Activated naive CD4-positive, alpha-beta T cell treated with anti-CD3 and anti-CD28 coated beads for 36 hours (primary cell): ENCODE measurements at regions of chr2 and their contacts with region 1.

Region 1: DNA sequence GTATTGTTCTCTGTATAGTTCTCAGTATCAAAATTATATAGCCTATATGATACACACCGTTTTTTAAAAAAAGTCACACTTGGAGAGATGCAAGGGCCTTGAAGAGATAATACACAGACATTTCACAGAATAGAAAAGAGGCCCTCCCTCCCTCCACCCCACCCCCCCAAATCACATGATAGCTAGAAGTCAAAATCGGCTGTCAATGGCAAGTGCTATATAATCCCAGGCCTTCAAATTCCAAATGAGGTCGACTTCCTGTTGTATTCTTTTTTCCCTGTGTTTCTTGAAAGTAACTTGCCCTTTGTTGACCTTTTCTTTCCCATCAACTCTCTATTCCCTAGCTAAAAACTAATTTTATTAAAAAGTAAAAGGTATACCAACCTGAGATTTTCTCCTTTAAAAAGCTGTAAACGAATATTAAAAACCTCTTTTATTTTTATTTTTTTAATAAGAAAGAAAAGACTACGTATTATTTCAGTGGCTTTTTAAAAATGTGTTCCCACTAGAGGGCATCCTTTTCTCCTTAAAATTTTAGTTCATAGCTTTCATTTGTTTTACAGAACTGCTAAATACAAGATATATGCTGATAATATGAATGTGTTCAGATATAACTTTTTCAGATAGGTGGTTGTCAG is 46.6 kb downstream of the KCMF1 start:
- DNase-seq: no peak
- H3K4me3 Mint-ChIP-seq: no peak overlapping the region
- H3K27ac Mint-ChIP-seq: peak overlapping the region; percentile 66
- H3K4me1 Mint-ChIP-seq: peaks cover 72% of the 10 kb centered on the region
- H3K27me3 Mint-ChIP-seq: no peaks in the 10 kb centered on the region

Region 2: DNA sequence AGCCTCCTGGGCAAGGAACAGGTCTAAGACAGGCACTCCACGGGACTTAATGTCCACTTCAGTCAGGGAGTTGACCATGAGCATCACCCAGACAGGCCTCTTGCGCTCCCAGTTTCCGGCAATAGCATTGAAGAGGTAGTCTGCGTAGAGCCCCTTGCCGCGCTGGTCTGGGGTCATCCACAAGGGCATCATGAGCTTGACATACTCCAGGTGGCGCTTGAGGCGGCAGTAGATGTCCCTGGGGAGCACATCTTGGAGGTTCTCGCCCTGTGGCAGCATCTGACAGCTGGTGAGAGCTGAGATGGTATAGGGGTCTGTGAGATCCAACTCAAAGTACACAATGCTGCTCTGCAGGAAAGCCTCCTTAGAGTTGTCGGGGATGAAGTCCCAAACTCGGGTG is 147.2 kb before region 1 on chr2:
- CTCF ChIA-PET with region 1: no interaction called
- intact Hi-C with region 1: loop called (anchors 1 kb)
- DNase-seq: no peak
- H3K4me3 Mint-ChIP-seq: no peak overlapping the region
- H3K27ac Mint-ChIP-seq: peak overlapping the region; percentile 6
- H3K4me1 Mint-ChIP-seq: peaks cover 89% of the 10 kb centered on the region
- H3K27me3 Mint-ChIP-seq: no peaks in the 10 kb centered on the region

Region 3: DNA sequence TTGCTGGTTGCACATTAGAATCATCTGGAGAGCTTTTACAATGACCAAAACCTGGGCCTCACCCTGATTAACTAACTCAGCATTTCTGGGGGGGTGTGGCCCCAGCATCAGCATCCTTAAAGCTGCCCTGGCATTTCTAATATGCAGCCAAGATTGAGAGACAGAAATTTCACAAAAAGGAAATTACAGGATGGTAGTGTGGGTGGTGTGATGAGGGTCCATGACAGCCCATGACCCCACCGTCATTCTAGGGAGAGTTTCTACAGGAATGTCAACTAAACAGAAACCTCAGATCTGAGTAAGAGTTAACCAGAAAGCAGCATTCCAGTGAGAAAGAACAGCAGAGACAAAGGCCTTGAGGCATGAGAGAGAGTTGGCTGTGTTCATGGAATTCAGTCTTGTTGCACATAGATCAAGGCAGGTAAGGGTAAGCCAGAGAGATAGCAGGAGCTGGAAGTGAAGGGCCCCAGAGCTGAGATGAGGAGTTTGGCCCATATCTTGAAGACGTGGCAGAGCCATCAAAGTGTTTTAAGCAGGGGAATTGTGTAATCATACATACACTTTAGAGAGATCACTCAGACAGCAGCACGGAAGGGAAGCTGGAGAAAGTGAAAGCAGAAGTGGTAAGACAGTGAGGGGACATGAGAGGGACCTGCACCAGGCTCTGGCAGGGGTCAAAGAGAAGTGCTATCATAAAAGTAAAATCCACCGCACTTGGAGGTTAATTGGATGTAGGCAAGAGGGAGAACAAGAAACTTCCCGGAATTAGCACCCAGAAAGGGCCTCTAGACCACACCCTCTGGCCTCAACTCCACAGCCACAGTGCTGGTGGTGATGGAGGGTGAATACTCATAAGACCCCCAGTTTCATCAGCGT is 128.9 kb before region 1 on chr2:
- CTCF ChIA-PET with region 1: no interaction called
- intact Hi-C with region 1: loop called (anchors 2 kb)
- DNase-seq: peak; percentile 73
- H3K4me3 Mint-ChIP-seq: peak overlapping the region; percentile 74
- H3K27ac Mint-ChIP-seq: peak overlapping the region; percentile 95
- H3K4me1 Mint-ChIP-seq: peaks cover 53% of the 10 kb centered on the region
- H3K27me3 Mint-ChIP-seq: no peaks in the 10 kb centered on the region

Region 4: GRCh38 chr2:84946204-84947009 is 71.1 kb before region 1 on chr2:
- CTCF ChIA-PET with region 1: interaction called, 26 read pairs
- intact Hi-C with region 1: loop called (anchors 1 kb)
- DNase-seq: peak; percentile 86
- H3K4me3 Mint-ChIP-seq: peak overlapping the region; percentile 62
- H3K27ac Mint-ChIP-seq: peak overlapping the region; percentile 92
- H3K4me1 Mint-ChIP-seq: peaks cover 49% of the 10 kb centered on the region
- H3K27me3 Mint-ChIP-seq: no peaks in the 10 kb centered on the region

Region 5: GRCh38 chr2:85843543-85843942 is 826.0 kb after region 1 on chr2:
- CTCF ChIA-PET with region 1: no interaction called
- intact Hi-C with region 1: no loop called
- DNase-seq: peak; percentile 53
- H3K4me3 Mint-ChIP-seq: no peak overlapping the region
- H3K27ac Mint-ChIP-seq: no peak overlapping the region
- H3K4me1 Mint-ChIP-seq: peaks cover 21% of the 10 kb centered on the region
- H3K27me3 Mint-ChIP-seq: no peaks in the 10 kb centered on the region